Posterior cingulate gyrus (tissue), 11 donors: ENCODE measurements at regions of chr7 and their contacts with region 1.

Region 1: GRCh38 chr7:143305423-143306070 is 10.4 kb upstream of the CLCN1 start:
- DNase-seq: peak; percentile 65 to 96 (median 84)

Region 2: DNA sequence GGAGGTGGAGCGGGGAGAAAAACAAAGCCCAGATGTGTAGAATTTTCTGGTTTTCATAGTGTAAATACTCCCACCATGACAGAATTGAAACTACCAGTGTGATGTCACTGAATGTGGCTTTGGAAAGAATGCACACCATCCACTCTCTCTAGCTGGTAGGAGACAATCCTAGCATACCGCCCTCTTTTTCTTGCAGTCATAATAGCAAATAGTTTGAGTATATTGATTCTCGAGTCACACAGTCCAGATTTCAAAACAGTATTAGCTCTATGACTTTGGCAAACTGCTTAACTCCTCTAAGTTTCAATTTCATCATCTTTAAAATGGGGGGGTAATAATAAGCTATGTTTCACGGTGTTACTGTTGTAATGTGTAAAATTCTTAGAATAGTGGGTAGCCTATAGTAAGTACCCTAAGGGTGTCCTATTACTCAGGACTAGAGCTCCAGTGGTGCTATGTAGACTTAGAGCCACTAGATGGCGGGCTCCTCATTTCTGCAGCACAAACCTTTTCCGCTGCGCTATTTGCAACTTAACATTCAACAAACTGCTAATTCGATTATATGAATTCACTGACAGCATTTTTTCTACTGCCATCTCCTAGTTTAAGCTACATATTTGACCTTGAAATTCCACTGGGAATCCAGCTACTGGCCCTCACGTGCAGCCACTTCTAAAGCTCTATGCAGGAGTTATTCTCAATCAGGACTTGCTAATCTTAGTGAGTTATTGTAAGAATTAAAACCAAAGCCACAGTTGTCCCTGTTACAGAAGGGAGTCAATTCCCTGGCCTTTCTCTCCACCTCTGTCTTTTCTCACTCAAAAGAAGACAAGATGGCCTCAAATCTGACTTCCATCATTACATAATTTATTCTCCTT is 65.0 kb before region 1 on chr7:
- intact Hi-C with region 1: loop called (anchors 1 kb)
- DNase-seq: peak in 8 of 10 donors; percentile 41 to 94 (median 72)